CD4-positive, alpha-beta T cell (primary cell): ENCODE measurements at regions of chr2 and their contacts with region 1.

Region 1: GRCh38 chr2:212990697-212991096 is 160.7 kb downstream of the IKZF2 start:
- DNase-seq: no peak
- ATAC-seq: no peak
- H3K4me3 ChIP-seq: no peak overlapping the region
- H3K4me3 Mint-ChIP-seq: no peak overlapping the region
- H3K27ac ChIP-seq: no peak overlapping the region
- H3K27ac Mint-ChIP-seq: no peak overlapping the region
- H3K4me1 ChIP-seq: no peaks in the 10 kb centered on the region
- H3K4me1 Mint-ChIP-seq: no peaks in the 10 kb centered on the region
- H3K27me3 ChIP-seq: no peaks in the 10 kb centered on the region
- H3K27me3 Mint-ChIP-seq: no peaks in the 10 kb centered on the region
- CTCF ChIP-seq: no peak

Region 2: DNA sequence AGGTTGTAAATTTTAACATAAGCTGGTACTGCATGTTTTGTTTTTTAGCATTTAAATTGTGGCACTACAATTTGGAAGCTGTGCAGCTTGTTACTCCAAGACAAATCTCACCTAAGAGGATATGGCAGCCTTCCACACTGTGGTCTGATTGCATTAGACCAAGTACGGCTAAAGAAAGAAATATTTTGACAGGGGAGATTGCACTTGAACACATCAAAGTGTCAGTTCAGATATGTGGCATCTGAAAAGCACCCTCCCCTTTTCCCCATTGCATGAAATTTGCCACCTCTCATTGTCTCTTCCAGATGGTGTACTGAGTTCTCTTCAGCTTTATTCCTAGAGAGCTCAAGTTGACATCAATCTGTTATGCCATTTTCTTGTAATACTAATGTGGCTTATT is 748.0 kb before region 1 on chr2:
- CTCF ChIA-PET with region 1: no interaction called
- POLR2A ChIA-PET with region 1: no interaction called
- intact Hi-C with region 1: no loop called
- DNase-seq: no peak
- ATAC-seq: no peak
- H3K4me3 ChIP-seq: no peak overlapping the region
- H3K4me3 Mint-ChIP-seq: no peak overlapping the region
- H3K27ac ChIP-seq: no peak overlapping the region
- H3K27ac Mint-ChIP-seq: no peak overlapping the region
- H3K4me1 ChIP-seq: no peaks in the 10 kb centered on the region
- H3K4me1 Mint-ChIP-seq: no peaks in the 10 kb centered on the region
- H3K27me3 ChIP-seq: no peaks in the 10 kb centered on the region
- H3K27me3 Mint-ChIP-seq: no peaks in the 10 kb centered on the region
- CTCF ChIP-seq: no peak

Region 3: DNA sequence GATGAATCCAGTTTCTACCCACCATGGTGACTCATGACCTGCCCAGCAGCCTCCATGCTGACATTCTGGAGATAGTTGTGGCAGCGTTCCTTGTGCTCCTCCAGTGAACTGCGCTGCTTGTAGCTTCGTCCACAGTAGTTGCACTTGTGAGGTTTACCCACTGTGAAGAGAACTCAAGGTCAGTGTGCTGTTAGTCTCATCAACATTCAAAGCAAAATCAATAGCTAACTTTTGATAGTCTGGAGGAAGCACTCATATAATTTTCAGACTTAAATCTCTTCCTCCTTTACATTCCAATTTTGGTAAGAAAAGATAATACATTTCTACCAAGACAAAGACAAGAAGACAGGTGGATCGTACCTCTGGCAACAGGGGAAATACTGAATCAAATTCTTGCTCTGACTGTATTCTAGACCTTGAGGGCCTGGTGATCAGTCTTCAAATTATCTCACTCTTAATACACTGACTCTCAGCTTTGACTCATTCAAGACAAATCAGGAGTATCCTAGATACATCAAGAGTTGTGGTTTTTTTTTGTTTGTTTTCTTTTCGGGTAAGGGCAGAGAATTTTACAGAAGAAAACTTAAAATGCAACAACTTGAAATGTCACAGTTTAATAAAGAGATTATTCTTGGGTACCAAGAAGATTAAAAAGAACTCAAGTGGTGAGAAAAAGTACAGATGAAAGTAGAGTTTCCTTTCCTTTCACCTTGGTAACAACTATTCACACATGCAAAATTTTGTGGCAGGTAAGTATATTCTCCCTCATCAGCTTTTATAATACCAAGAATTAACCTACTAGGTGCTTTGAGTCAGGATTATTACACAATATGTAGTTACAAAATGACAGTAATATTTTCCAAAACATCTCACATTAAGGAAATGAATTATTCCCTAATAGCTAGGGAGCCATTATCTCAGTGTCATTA is 31.5 kb after region 1 on chr2:
- CTCF ChIA-PET with region 1: no interaction called
- POLR2A ChIA-PET with region 1: no interaction called
- intact Hi-C with region 1: loop called in 1 of 2 experiments (anchors 1 kb)
- DNase-seq: peak in 1 of 14 experiments; percentile 10
- ATAC-seq: no peak
- H3K4me3 ChIP-seq: no peak overlapping the region
- H3K4me3 Mint-ChIP-seq: no peak overlapping the region
- H3K27ac ChIP-seq: no peak overlapping the region
- H3K27ac Mint-ChIP-seq: no peak overlapping the region
- H3K4me1 ChIP-seq: no peaks in the 10 kb centered on the region
- H3K4me1 Mint-ChIP-seq: peaks cover 22% of the 10 kb centered on the region
- H3K27me3 ChIP-seq: no peaks in the 10 kb centered on the region
- H3K27me3 Mint-ChIP-seq: no peaks in the 10 kb centered on the region
- CTCF ChIP-seq: no peak